HEK293 (cell line): ENCODE measurements at regions of chrX and their contacts with region 1.

Region 1: DNA sequence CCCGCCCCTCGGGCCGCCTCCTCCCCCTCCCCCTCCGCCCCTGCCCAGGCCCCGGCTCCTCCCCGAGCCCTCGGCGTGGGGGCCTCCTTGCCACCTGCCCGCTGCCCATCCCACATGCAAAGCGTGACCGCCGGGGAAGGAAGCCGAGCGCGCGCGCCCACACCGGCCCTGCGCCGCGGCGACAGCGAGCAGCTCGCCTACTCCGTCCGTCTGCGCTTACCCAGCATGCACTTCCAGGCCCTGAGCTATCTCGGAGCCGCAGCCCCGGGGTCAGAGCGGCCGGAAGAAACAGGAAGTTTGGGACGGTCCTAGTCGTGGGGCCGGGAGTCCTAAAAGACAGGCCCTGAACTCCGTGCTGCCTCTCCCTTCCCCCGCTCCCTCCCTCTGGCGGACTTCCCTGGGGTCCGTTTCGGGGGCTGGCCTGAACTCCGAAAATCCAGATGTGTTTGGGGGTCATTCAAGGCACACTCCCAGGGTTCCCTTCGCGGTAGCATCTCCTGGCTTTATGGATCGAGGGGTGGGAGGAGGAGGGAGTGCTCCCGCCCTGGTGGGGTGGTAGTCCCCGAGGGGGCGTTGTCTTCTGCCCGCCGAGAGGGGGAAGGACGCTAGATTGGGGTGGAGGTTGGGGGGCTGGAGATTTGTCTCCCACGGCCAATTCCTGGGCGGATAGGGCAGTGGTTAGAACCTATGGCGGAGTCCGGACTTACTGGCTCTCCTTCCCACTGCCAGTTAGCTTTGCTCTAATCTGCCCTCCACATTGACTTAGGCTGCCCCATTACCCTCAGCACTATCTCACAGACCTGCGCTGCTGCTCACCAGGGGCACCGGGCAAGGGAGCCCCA is 25.0 kb upstream of the BCORL1 start:
- H3K4me3 ChIP-seq: peak overlapping the region; percentile 26
- H3K27ac ChIP-seq: peak overlapping the region; percentile 59; the same call in 1 of the 2 replicates
- H3K4me1 ChIP-seq: peaks cover 3% of the 10 kb centered on the region; the same call in 1 of the 2 replicates
- CTCF ChIP-seq: no peak

Region 2: GRCh38 chrX:128759745-128760144 is 1197.7 kb before region 1 on chrX:
- CTCF ChIA-PET with region 1: no interaction called
- POLR2A ChIA-PET with region 1: no interaction called
- H3K4me3 ChIP-seq: no peak overlapping the region
- H3K27ac ChIP-seq: no peak overlapping the region
- H3K4me1 ChIP-seq: no peaks in the 10 kb centered on the region
- CTCF ChIP-seq: no peak

Region 3: DNA sequence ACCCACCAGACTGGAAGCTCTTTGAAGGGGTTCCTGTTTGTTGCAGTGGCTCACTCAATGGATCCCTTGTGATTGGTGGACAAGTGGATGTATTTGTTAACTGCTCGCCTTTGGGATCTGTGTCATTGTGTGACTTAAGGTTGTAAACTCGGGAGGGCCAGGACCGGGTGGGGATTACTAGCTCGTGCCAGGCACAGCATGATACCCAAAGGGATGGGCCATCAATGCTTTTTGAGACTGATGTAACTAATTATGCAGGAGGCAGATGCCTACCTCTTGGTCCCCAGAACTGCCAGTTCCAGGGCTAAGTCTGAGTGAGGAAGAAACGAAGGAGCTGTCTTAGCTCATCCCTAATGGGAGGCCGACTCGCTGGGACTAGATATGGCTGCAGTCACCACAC is 23.8 kb before region 1 on chrX:
- CTCF ChIA-PET with region 1: interaction called, 4 read pairs
- POLR2A ChIA-PET with region 1: interaction called, 12 read pairs
- H3K4me3 ChIP-seq: no peak overlapping the region
- H3K27ac ChIP-seq: no peak overlapping the region
- H3K4me1 ChIP-seq: no peaks in the 10 kb centered on the region; the same call in 1 of the 2 replicates
- CTCF ChIP-seq: no peak

Region 4: GRCh38 chrX:129982274-129983251 is 25.1 kb after region 1 on chrX and contains the start of gene BCORL1:
- CTCF ChIA-PET with region 1: no interaction called
- POLR2A ChIA-PET with region 1: interaction called, 18 read pairs
- H3K4me3 ChIP-seq: peak within 1 kb of the TSS; percentile 43
- H3K27ac ChIP-seq: peak within 1 kb of the TSS; percentile 74
- H3K4me1 ChIP-seq: peaks cover 6% of the 10 kb centered on the region; the same call in 1 of the 2 replicates
- CTCF ChIP-seq: peak; percentile 31

Region 5: GRCh38 chrX:129996120-129996519 is 38.7 kb after region 1 on chrX:
- CTCF ChIA-PET with region 1: no interaction called
- POLR2A ChIA-PET with region 1: no interaction called
- H3K4me3 ChIP-seq: no peak overlapping the region
- H3K27ac ChIP-seq: no peak overlapping the region
- H3K4me1 ChIP-seq: no peaks in the 10 kb centered on the region
- CTCF ChIP-seq: no peak